AG04449 (cell line): ENCODE measurements at regions of chr12 and their contacts with region 1.

Region 1: GRCh38 chr12:20657496-20657895 is 37.6 kb upstream of the SLCO1C1 start:
- DNase-seq: no peak
- H3K4me3 ChIP-seq: no peak overlapping the region
- CTCF ChIP-seq: no peak

Region 2: GRCh38 chr12:20646239-20646827 is 11.2 kb before region 1 on chr12:
- CTCF ChIA-PET with region 1: interaction called, 10 read pairs
- POLR2A ChIA-PET with region 1: no interaction called
- DNase-seq: no peak
- H3K4me3 ChIP-seq: no peak overlapping the region
- CTCF ChIP-seq: peak; percentile 50

Region 3: GRCh38 chr12:20681334-20681733 is 23.8 kb after region 1 on chr12:
- CTCF ChIA-PET with region 1: no interaction called
- POLR2A ChIA-PET with region 1: no interaction called
- DNase-seq: no peak
- H3K4me3 ChIP-seq: no peak overlapping the region
- CTCF ChIP-seq: no peak